ENCODE measurements at regions of chr2 and their contacts with region 1.

Region 1: GRCh38 chr2:43542285-43542937 is 53.4 kb downstream of the THADA start:
- DNase-seq: no peak
- H3K4me3 Mint-ChIP-seq: no peak overlapping the region
- H3K27ac Mint-ChIP-seq: no peak overlapping the region
- H3K4me1 Mint-ChIP-seq: peaks cover 8% of the 10 kb centered on the region
- H3K27me3 Mint-ChIP-seq: no peaks in the 10 kb centered on the region

Region 2: DNA sequence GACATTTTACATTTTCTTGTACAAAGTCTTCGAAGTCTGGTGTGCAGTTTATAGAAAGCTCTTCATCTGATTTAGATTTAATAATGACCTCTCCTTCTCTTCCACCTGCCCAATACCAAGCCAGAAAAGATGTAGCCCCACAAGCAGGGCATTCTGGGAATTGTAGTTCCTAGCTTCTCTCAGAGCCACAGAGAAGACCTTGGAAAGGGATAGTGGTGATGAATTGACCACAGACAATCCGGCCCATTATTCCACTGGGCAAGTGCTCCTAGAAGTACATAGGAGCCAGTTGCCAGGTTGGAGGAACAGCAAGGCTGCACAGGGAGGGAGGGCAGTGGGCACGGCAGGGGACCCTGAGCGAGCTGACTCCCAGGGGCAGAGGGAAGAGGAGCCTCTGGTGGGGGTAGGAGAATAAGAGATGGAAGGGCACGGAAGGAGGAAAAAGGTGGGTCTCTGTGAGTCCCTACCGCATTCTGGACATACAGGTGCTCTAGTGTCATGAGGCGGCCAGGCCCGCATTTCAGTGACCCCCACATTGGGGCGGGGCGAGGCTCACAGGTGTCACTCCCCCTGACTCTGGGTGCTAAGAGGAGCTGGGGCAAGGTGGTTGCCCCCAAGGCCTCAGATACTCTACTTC is 597.5 kb before region 1 on chr2:
- CTCF ChIA-PET with region 1: interaction called, 20 read pairs
- DNase-seq: no peak
- H3K4me3 Mint-ChIP-seq: no peak overlapping the region
- H3K27ac Mint-ChIP-seq: no peak overlapping the region
- H3K4me1 Mint-ChIP-seq: peaks cover 3% of the 10 kb centered on the region
- H3K27me3 Mint-ChIP-seq: peaks cover 17% of the 10 kb centered on the region